ENCODE measurements at regions of chr9 and their contacts with region 1.

Region 1: DNA sequence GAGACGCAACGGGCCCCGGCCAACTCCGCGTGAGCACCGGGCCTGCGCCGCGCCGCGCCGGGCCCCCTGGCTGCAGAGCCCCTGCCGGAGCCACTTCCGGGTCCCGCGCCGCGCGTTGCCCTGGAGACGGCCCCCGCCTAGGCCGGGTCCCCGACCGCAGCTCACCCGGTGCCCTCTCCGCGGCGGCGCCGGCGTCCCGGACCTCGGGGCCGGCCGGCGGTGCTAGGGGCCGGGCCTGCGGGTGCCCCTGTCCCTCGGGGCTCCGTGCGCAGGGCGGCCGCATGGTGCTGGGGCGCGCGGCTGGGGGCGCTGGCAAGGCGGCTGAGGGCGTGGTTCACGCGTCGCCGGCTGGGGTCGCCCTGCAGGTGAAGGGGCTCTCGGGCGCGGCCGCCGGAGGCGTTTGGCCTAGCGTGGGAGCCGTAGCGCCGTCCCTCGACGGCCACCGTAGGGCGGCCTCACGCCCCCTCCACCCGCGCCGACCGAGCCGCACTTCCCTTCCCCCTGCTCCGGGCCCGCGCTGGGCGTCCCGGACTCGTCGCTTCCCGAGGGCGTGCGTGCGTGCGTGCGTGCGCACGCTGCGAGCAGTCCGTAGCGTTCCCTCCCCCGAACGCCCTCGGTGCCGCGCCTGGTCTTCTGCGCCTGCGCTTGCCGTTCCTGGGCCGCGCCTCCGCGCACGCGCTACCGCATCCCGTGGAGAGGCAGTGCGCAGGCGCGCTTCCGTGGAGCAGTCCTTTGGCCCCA is at the start of gene TMEM250:
- DNase-seq: peak; percentile 97
- H3K4me3 ChIP-seq: peak within 1 kb of the TSS; percentile 92
- H3K4me3 Mint-ChIP-seq: peak within 1 kb of the TSS; percentile 78
- H3K27ac Mint-ChIP-seq: peak within 1 kb of the TSS; percentile 64
- H3K4me1 ChIP-seq: peaks cover 28% of the 10 kb centered on the region
- H3K4me1 Mint-ChIP-seq: no peaks in the 10 kb centered on the region
- H3K27me3 ChIP-seq: no peaks in the 10 kb centered on the region
- H3K27me3 Mint-ChIP-seq: no peaks in the 10 kb centered on the region
- CTCF ChIP-seq: no peak
- total RNA-seq, gene TMEM250: 35.6 and 38.2 TPM in 2 replicates

Region 2: DNA sequence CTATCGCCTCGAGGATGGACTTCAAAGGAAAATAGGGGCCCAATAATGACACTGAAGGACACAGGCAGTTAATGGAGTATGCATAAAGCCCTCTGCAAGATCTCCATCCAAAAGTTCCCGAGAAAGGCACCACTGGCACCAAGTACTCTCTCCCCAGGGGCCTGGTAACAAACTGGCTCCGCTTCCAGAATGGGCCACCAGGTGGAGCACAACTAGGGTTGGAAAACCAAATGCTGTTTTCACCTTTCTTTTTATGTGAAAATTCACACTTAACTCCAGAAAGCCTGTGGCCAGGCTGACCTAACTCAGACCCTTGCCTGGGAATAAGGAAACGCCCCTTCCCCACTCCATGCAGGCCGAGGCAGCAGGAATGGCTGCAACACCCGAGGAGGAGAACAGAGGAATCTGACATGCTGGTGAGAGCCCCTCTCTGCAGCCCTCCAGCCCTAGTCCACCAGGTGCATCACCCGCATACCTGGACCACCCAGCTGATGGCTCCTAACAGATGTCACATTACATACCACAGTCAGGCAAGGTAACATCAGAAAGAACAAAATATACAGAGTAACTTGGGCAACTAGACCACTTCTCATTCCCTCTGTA is 253.9 kb before region 1 on chr9:
- CTCF ChIA-PET with region 1: no interaction called
- POLR2A ChIA-PET with region 1: no interaction called
- intact Hi-C with region 1: loop called (anchors 2 kb)
- DNase-seq: peak; percentile 64 to 74
- H3K4me3 ChIP-seq: no peak overlapping the region
- H3K4me3 Mint-ChIP-seq: no peak overlapping the region
- H3K27ac Mint-ChIP-seq: no peak overlapping the region
- H3K4me1 ChIP-seq: no peaks in the 10 kb centered on the region
- H3K4me1 Mint-ChIP-seq: no peaks in the 10 kb centered on the region
- H3K27me3 ChIP-seq: no peaks in the 10 kb centered on the region
- H3K27me3 Mint-ChIP-seq: no peaks in the 10 kb centered on the region
- CTCF ChIP-seq: peak; percentile 88 to 90

Region 3: DNA sequence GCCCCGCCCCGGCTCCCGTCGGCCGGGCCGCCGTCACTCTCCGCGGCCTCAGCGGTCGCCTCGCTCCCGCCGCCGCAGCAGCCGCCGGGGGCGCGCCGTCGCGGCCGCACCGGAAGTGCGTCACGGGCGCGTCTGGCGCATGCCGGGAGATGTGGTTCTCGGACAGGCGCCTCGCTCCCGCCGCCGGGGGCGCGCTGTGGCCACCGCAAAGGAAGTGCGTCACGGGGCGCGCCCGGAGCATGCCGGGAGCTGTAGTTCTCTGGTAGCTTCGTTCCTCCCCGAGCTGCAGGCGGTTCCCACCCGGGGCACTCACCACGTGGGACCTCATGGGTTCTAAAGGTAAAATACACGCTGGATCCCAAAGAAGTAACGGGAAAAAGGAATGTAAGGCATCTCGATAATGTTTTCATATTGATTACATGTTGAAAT is 157.2 kb before region 1 on chr9 and contains the start of gene UBAC1:
- CTCF ChIA-PET with region 1: interaction called, 3 read pairs
- POLR2A ChIA-PET with region 1: no interaction called
- intact Hi-C with region 1: loop called (anchors 2 kb)
- DNase-seq: peak; percentile 96
- H3K4me3 ChIP-seq: peak within 1 kb of the TSS; percentile 92
- H3K4me3 Mint-ChIP-seq: peak within 1 kb of the TSS; percentile 67
- H3K27ac Mint-ChIP-seq: peak within 1 kb of the TSS; percentile 63
- H3K4me1 ChIP-seq: peaks cover 8% of the 10 kb centered on the region
- H3K4me1 Mint-ChIP-seq: peaks cover 18% of the 10 kb centered on the region
- H3K27me3 ChIP-seq: no peaks in the 10 kb centered on the region
- H3K27me3 Mint-ChIP-seq: peaks cover 6% of the 10 kb centered on the region
- CTCF ChIP-seq: peak; percentile 30 to 31
- total RNA-seq, gene UBAC1: 50.7 and 55.4 TPM in 2 replicates

Region 4: GRCh38 chr9:135971892-135972291 is 146.6 kb before region 1 on chr9:
- CTCF ChIA-PET with region 1: interaction called, 23 read pairs
- POLR2A ChIA-PET with region 1: no interaction called
- intact Hi-C with region 1: loop called (anchors 1 kb)
- DNase-seq: peak; percentile 94 to 96
- H3K4me3 ChIP-seq: no peak overlapping the region
- H3K4me3 Mint-ChIP-seq: no peak overlapping the region
- H3K27ac Mint-ChIP-seq: no peak overlapping the region
- H3K4me1 ChIP-seq: 0 out of 2 replicates have a peak, but pooled peaks cover 4% of the 10 kb centered on the region
- H3K4me1 Mint-ChIP-seq: peaks cover 5% of the 10 kb centered on the region
- H3K27me3 ChIP-seq: no peaks in the 10 kb centered on the region
- H3K27me3 Mint-ChIP-seq: peaks cover 7% of the 10 kb centered on the region
- CTCF ChIP-seq: no peak

Region 5: DNA sequence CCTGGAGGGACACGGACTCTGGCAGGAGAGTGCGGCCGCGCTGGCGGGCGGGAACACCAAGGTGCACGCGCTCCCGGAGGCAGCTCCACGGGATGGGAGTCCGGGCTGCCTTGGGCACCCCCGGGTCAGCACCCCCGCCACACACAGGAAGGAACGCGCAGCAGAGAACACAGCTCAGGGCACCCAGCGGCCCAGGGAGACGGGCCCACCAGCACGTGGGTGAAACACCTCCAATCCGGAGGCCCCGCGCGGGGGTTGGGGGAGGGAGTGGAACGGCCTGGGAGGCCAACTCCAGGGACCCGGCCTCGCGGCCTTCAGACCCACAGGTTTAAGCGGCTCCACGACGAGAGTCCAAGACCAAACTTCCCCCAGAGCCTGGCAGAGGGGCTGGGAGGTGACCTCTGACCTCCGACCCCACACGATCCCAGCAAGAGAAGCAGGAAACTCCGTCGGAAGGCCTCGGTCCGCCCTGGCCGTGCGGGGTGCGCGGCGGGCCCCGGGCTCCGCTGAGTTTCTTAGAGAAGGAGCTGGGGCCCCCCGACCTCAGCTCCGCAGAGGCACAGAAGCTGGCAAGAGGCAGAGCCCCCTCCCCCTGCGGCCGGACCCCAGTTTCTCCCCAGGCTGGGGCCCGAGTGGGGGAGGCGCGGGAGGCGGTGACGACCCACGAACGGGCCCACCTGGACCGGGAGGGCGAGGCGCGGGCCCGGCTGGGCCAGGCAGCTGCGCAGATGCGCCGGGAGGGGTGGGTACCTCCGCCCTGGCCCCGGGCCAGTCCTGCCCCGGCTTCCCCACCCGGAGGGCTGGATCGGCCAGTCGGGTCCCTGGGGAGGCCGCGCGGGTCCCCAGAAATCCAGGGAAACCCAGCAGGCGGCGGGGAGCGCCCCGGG is 24.3 kb before region 1 on chr9:
- CTCF ChIA-PET with region 1: interaction called, 5 read pairs
- POLR2A ChIA-PET with region 1: interaction called, 6 read pairs
- intact Hi-C with region 1: loop called (anchors 2 kb)
- DNase-seq: peak; percentile 81 to 84
- H3K4me3 ChIP-seq: peak overlapping the region; percentile 44
- H3K4me3 Mint-ChIP-seq: peak overlapping the region; percentile 76
- H3K27ac Mint-ChIP-seq: no peak overlapping the region
- H3K4me1 ChIP-seq: peaks cover 14% of the 10 kb centered on the region
- H3K4me1 Mint-ChIP-seq: peaks cover 4% of the 10 kb centered on the region
- H3K27me3 ChIP-seq: no peaks in the 10 kb centered on the region
- H3K27me3 Mint-ChIP-seq: no peaks in the 10 kb centered on the region
- CTCF ChIP-seq: no peak